Activated T-helper 1 cell treated with anti-CD3 and anti-CD28 coated beads, Interleukin-12 subunit alpha, Interleukin-12 subunit beta, Interleukin-2, Interleukin-4 antibody, amounts not matched to agents 30 ng/mL and 10 ng/mL and 1 ng/mL, durations not matched to agents 14 hours and 24 hours and 36 hours (primary cell): ENCODE measurements at regions of chr2 and their contacts with region 1.

Region 1: DNA sequence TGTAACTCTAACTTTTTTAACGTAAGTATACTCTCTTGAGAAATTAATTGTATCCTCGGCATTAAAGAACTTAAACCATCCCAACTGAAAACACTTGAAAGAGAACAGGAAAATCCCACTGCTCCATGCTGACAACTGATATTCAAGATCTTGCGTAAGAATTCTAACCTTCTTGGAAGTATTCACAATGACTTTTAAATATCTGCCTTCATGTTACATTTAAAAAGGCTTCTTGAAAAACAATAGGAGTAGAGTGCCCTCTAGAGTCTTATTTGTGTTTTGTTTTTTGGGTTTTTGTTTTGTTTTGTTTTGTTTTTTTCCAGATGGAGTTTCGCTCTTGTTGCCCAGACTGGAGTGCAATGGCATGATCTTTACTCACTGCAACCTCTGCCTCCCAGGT is 65.4 kb upstream of the DNAJC10 start:
- DNase-seq: no peak
- H3K4me3 Mint-ChIP-seq: peak overlapping the region; percentile 17
- H3K27ac Mint-ChIP-seq: no peak overlapping the region
- H3K4me1 Mint-ChIP-seq: peaks cover 24% of the 10 kb centered on the region
- H3K27me3 Mint-ChIP-seq: peaks cover 3% of the 10 kb centered on the region

Region 2: DNA sequence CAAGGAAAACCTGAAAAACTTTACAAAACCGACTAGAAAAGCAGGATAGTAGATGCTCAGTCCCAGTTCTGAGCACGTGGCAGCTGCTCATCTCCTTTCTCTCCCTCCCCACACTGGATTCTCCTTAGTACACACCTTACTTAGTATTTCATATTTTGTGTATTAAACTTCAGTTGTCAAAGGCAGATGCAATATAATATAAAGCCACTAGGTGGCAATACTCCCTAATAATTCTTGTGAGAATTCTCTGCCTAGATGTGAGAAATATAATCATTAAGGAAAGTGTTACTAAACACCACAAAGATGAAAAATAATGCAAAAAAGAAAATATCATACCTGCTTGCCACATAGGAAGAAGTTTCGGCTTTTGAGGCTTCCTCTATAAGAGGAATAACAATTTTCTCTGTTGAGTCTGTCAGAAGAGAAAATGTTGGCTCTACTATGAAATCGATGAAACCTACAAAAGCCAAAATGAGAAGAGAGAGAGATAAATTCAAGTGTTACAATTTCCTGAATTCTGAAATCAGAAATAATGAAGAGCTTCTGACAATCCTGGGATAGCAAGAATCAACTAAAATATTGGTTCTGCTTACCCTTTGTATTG is 464.5 kb before region 1 on chr2:
- intact Hi-C with region 1: loop called (anchors 1 kb)
- DNase-seq: no peak
- H3K4me3 Mint-ChIP-seq: no peak overlapping the region
- H3K27ac Mint-ChIP-seq: no peak overlapping the region
- H3K4me1 Mint-ChIP-seq: no peaks in the 10 kb centered on the region
- H3K27me3 Mint-ChIP-seq: peaks cover 5% of the 10 kb centered on the region

Region 3: GRCh38 chr2:182240862-182241371 is 409.8 kb before region 1 on chr2:
- intact Hi-C with region 1: loop called (anchors 1 kb)
- DNase-seq: no peak
- H3K4me3 Mint-ChIP-seq: no peak overlapping the region
- H3K27ac Mint-ChIP-seq: no peak overlapping the region
- H3K4me1 Mint-ChIP-seq: no peaks in the 10 kb centered on the region
- H3K27me3 Mint-ChIP-seq: no peaks in the 10 kb centered on the region